Prostate gland (tissue), 2 donors: ENCODE measurements at regions of chr17 and their contacts with region 1.

Region 1: DNA sequence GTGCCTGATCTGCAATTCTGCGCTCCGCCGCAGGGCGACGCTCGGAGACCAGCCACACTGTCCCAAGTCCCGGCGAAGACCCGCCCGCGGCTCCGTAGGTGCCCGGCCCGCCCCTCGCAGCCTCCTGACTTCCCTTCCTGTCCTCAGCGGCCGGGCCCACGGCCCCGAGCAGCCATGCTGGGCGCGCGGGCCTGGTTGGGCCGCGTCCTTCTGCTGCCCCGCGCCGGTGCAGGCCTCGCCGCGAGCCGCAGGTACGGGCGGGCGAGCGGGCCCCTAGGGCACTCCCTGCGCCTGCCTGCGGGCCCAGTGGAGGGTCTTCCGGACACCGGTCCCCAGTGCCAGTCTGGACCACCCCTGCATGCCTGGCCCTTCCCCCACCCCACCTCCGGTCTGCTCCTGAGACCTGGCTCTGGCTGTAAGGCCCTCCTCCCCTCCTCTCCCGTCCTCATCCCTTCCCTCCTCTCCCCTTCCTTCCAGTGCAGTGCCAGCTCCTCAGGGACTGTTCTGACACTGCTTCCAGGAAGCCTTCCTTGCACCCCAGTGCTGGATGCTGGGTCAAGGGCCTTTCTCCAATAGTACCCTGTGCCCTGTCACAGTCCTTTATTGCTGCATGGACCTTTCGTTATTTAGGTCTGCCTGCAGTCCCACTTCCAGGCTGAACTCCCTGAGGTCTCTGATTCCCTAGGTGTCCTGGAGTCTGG is at the start of gene SPATA20:
- DNase-seq: peak; percentile 93
- H3K4me3 ChIP-seq: peak within 1 kb of the TSS; percentile 72 to 73
- H3K27ac ChIP-seq: peak within 1 kb of the TSS; percentile 85 to 86
- H3K4me1 ChIP-seq: peaks cover 18% of the 10 kb centered on the region
- H3K27me3 ChIP-seq: no peaks in the 10 kb centered on the region
- CTCF ChIP-seq: peak; percentile 95 to 100 (median 99)
- POLR2A ChIP-seq: peak; percentile 93
- total RNA-seq, gene SPATA20: 188 to 208 TPM

Region 2: GRCh38 chr17:50331085-50331791 is 215.9 kb before region 1 on chr17:
- intact Hi-C with region 1: no loop called
- DNase-seq: no peak
- H3K4me3 ChIP-seq: no peak overlapping the region
- H3K27ac ChIP-seq: no peak overlapping the region
- H3K4me1 ChIP-seq: no peaks in the 10 kb centered on the region
- H3K27me3 ChIP-seq: no peaks in the 10 kb centered on the region
- CTCF ChIP-seq: no peak
- POLR2A ChIP-seq: no peak

Region 3: GRCh38 chr17:50626037-50626574 is 78.9 kb after region 1 on chr17:
- intact Hi-C with region 1: loop called (anchors 5 kb)
- DNase-seq: peak; percentile 81
- H3K4me3 ChIP-seq: no peak overlapping the region
- H3K27ac ChIP-seq: no peak overlapping the region
- H3K4me1 ChIP-seq: no peaks in the 10 kb centered on the region
- H3K27me3 ChIP-seq: no peaks in the 10 kb centered on the region
- CTCF ChIP-seq: peak; percentile 52 to 91 (median 88)
- POLR2A ChIP-seq: no peak

Region 4: DNA sequence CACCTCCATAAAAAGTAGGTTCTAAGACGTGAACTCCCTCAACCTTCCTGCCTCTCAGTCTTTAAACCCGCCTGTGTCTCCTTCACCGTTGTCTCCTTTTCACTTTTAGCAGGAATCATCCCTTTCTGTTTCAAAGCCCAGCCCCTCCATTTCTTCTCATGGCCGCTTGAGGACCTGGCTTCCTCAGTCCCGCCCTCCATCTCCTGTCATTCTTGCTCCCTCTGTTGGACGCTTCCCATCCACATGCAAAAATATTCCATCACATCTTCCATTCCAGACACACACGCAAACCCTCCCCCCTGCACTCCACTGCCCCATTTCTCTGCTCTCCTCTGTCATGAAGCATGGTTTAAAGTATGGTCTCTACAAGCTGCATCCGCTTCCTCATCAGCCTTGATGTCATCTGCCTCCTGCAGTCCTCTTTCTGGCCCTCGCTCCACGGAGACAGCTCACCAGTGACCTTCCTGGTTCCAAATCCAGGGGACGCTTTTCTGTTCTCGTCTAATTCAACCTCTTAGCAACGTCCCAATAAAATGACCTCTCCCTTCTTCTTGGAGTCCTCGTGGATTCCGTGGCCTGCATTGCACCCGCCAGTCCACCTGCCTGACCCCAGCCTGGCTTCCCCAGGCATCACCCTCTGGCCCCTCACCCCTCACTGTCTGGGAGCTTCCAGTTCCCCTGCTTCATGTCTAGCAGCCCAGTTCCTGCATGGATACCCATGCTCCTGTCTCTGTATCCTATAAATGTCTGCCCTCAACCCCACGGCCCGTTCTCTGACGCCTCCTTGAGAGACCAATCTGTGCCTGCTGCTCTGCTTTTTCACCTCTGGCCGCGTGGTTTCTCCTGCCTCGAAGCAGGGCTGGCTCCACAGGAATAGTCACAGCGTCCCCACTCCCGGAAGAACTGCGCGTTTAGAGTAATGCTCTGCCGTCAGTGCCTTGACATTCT is 134.4 kb after region 1 on chr17:
- intact Hi-C with region 1: loop called (anchors 5 kb)
- DNase-seq: peak; percentile 58
- H3K4me3 ChIP-seq: no peak overlapping the region
- H3K27ac ChIP-seq: no peak overlapping the region
- H3K4me1 ChIP-seq: no peaks in the 10 kb centered on the region
- H3K27me3 ChIP-seq: no peaks in the 10 kb centered on the region
- CTCF ChIP-seq: peak; percentile 20 to 77 (median 51)
- POLR2A ChIP-seq: no peak

Region 5: GRCh38 chr17:50783193-50783660 is 236.0 kb after region 1 on chr17:
- intact Hi-C with region 1: loop called (anchors 10 kb)
- DNase-seq: peak; percentile 74
- H3K4me3 ChIP-seq: no peak overlapping the region
- H3K27ac ChIP-seq: no peak overlapping the region
- H3K4me1 ChIP-seq: no peaks in the 10 kb centered on the region
- H3K27me3 ChIP-seq: no peaks in the 10 kb centered on the region
- CTCF ChIP-seq: peak; percentile 84 to 99 (median 97)
- POLR2A ChIP-seq: no peak

Region 6: DNA sequence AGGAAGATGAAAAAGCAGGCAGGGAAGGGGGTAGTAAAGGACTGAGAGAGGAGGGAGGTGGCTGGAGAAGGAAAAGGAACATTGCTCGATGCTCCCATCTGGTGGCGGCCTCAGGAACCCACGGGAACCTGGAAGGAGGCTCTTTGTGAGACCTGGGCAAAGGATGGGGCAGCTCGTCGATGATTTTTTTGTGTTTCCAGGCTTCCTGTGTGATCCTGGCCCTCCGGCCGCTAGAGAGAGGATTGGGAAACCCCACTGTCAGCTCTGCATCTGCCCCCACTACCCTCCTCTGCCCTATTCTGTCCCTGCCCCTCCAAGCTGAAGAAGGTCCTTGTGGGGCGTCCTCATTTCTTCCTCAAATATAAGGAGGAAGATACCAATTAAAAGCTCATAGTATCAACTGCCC is 294.8 kb after region 1 on chr17:
- intact Hi-C with region 1: loop called (anchors 2 kb)
- DNase-seq: peak; percentile 55
- H3K4me3 ChIP-seq: no peak overlapping the region
- H3K27ac ChIP-seq: no peak overlapping the region
- H3K4me1 ChIP-seq: no peaks in the 10 kb centered on the region
- H3K27me3 ChIP-seq: no peaks in the 10 kb centered on the region
- CTCF ChIP-seq: peak; percentile 68 to 88 (median 85)
- POLR2A ChIP-seq: no peak

Region 7: GRCh38 chr17:50949989-50950881 is 403.1 kb after region 1 on chr17:
- intact Hi-C with region 1: loop called (anchors 10 kb)
- DNase-seq: peak; percentile 67
- H3K4me3 ChIP-seq: no peak overlapping the region
- H3K27ac ChIP-seq: peak overlapping the region; percentile 77 to 82
- H3K4me1 ChIP-seq: peaks cover 20% of the 10 kb centered on the region
- H3K27me3 ChIP-seq: no peaks in the 10 kb centered on the region
- CTCF ChIP-seq: peak; percentile 35 to 91 (median 83)
- POLR2A ChIP-seq: peak; percentile 32